B cell (primary cell): ENCODE measurements at regions of chr19 and their contacts with region 1.

Region 1: GRCh38 chr19:38374429-38375176 is at the start of gene PSMD8:
- DNase-seq: peak; percentile 100
- ATAC-seq: peak; percentile 97
- H3K4me3 ChIP-seq: peak within 1 kb of the TSS; percentile 69 to 92 (median 80)
- H3K4me3 Mint-ChIP-seq: peak within 1 kb of the TSS; percentile 93
- H3K27ac ChIP-seq: peak within 1 kb of the TSS; percentile 88 to 90
- H3K27ac Mint-ChIP-seq: peak within 1 kb of the TSS; percentile 96
- H3K4me1 ChIP-seq: peaks cover 17 to 26% of the 10 kb centered on the region in 2 donors
- H3K4me1 Mint-ChIP-seq: peaks cover 26% of the 10 kb centered on the region
- H3K27me3 ChIP-seq: peaks cover 0 to 12% (median 0%) of the 10 kb centered on the region in 4 experiments
- H3K27me3 Mint-ChIP-seq: peaks cover 6% of the 10 kb centered on the region
- CTCF ChIP-seq: peak; percentile 18
- total RNA-seq, gene PSMD8: 77.1 and 88.1 TPM in 2 replicates

Region 2: GRCh38 chr19:38213911-38214625 is 160.5 kb before region 1 on chr19:
- CTCF ChIA-PET with region 1: no interaction called
- POLR2A ChIA-PET with region 1: interaction called, 11 read pairs
- intact Hi-C with region 1: no loop called
- DNase-seq: peak; percentile 63
- ATAC-seq: peak; percentile 45
- H3K4me3 ChIP-seq: no peak overlapping the region
- H3K4me3 Mint-ChIP-seq: peak overlapping the region; percentile 38
- H3K27ac ChIP-seq: no peak overlapping the region
- H3K27ac Mint-ChIP-seq: peak overlapping the region; percentile 50
- H3K4me1 ChIP-seq: peaks cover 26 to 29% of the 10 kb centered on the region in 2 donors
- H3K4me1 Mint-ChIP-seq: peaks cover 31% of the 10 kb centered on the region
- H3K27me3 ChIP-seq: peaks cover 0 to 58% (median 16%) of the 10 kb centered on the region in 4 experiments
- H3K27me3 Mint-ChIP-seq: peaks cover 32% of the 10 kb centered on the region
- CTCF ChIP-seq: no peak

Region 3: GRCh38 chr19:38245826-38246498 is 128.6 kb before region 1 on chr19:
- CTCF ChIA-PET with region 1: interaction called, 14 read pairs
- POLR2A ChIA-PET with region 1: interaction called, 3 read pairs
- intact Hi-C with region 1: no loop called
- DNase-seq: no peak
- ATAC-seq: no peak
- H3K4me3 ChIP-seq: no peak overlapping the region
- H3K4me3 Mint-ChIP-seq: no peak overlapping the region
- H3K27ac ChIP-seq: no peak overlapping the region
- H3K27ac Mint-ChIP-seq: no peak overlapping the region
- H3K4me1 ChIP-seq: peaks cover 3 to 12% of the 10 kb centered on the region in 2 donors
- H3K4me1 Mint-ChIP-seq: peaks cover 15% of the 10 kb centered on the region
- H3K27me3 ChIP-seq: no peaks in the 10 kb centered on the region
- H3K27me3 Mint-ChIP-seq: no peaks in the 10 kb centered on the region
- CTCF ChIP-seq: no peak

Region 4: DNA sequence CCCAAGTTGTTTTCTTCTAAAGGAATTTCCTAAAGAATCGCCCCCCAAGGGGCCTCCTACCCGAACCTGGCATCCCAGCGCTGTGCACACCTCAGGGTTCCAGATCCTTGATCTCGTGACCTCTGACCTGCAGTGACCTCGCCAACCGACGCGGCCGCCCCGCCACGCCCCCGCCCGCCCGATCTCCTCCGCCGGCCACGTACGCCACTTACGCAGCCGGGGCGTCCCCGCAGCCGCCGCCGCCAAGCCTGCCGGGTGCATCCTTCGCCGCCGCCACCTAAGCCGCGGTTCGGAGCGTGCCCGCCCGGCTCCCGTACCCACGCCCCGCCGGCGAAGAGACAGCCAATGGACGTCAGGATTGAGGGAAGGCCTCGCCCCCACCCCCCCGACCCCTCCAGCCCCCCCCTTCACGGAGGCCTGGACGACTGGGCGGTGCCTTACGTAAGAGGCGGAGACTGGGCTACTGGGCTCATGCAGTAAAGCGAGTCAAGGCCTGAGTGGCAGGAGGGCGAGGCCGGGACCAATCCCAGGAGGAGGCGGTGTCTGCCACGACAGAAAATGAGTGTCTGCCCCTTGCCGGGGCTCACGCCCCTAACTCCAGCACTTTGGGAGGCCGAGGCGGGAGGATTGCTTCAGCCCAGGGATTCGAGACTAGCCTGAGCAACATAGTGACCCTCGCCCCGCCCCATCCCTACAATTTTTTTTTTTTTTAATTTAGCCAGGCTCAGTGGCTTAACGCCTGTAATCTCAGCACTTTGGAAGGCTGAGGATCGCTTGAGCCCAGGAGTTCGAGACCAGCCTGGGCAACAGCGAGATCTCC is 58.7 kb before region 1 on chr19 and contains the start of gene YIF1B:
- CTCF ChIA-PET with region 1: no interaction called
- POLR2A ChIA-PET with region 1: interaction called, 3 read pairs
- intact Hi-C with region 1: loop called (anchors 1 kb)
- DNase-seq: peak; percentile 96
- ATAC-seq: peak; percentile 91
- H3K4me3 ChIP-seq: peak within 1 kb of the TSS; percentile 62 to 90 (median 70)
- H3K4me3 Mint-ChIP-seq: peak within 1 kb of the TSS; percentile 96
- H3K27ac ChIP-seq: peak within 1 kb of the TSS; percentile 85 to 91
- H3K27ac Mint-ChIP-seq: peak within 1 kb of the TSS; percentile 96
- H3K4me1 ChIP-seq: peaks cover 29 to 47% of the 10 kb centered on the region in 2 donors
- H3K4me1 Mint-ChIP-seq: peaks cover 47% of the 10 kb centered on the region
- H3K27me3 ChIP-seq: peaks cover 0 to 2% (median 0%) of the 10 kb centered on the region in 4 experiments
- H3K27me3 Mint-ChIP-seq: no peaks in the 10 kb centered on the region
- CTCF ChIP-seq: no peak
- total RNA-seq, gene YIF1B: 30.6 and 31.6 TPM in 2 replicates

Region 5: DNA sequence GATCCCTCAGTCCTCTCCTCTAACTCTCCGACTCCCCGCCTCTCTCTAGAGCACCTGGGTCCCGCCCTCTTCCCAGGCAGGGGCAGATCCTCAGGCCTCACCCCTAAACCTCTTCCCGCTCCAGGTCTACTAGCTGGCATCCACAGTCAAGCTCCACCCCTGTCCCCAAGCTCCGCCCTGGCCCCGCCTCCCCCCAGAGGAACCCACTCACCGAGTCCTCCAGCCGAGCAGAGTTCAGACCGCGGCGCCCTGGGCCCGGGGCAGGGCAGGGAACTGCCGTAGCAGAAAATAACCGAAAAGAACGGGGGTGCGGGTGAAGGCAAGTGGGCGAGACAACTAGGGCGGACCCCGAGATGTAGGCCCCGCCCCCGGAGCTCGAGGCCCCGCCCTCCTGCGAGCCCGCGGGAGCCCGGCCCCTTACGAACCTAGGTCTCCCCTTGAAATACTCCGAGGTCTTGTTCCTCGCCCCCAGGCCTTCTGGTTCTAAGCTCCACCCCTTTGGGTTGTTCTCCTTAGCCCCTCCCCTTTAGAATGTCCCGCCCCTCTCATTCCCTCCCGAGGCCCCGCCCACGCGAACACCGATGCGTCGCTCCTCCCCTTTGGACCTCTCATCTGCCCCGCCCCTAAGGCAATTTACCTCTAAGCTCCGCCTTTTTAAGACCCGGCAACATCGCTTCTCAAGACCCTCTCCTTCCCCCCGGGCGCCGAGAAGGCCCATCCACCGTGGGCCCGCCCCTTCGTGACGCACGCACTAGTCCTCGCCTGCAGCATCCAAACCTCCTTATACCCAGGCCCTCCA is 13.1 kb after region 1 on chr19 and contains the start of gene GGN:
- CTCF ChIA-PET with region 1: no interaction called
- POLR2A ChIA-PET with region 1: interaction called, 11 read pairs
- intact Hi-C with region 1: loop called (anchors 1 kb)
- DNase-seq: peak; percentile 84
- ATAC-seq: peak; percentile 65
- H3K4me3 ChIP-seq: peak within 1 kb of the TSS; percentile 11 to 77 (median 41)
- H3K4me3 Mint-ChIP-seq: peak within 1 kb of the TSS; percentile 97
- H3K27ac ChIP-seq: no peak within 1 kb of the TSS
- H3K27ac Mint-ChIP-seq: peak within 1 kb of the TSS; percentile 75
- H3K4me1 ChIP-seq: peaks cover 36% of the 10 kb centered on the region in 2 donors
- H3K4me1 Mint-ChIP-seq: peaks cover 31% of the 10 kb centered on the region
- H3K27me3 ChIP-seq: peaks cover 0 to 49% (median 21%) of the 10 kb centered on the region in 4 experiments
- H3K27me3 Mint-ChIP-seq: peaks cover 27% of the 10 kb centered on the region
- CTCF ChIP-seq: no peak
- total RNA-seq, gene GGN: 0.34 TPM in 2 replicates

Region 6: GRCh38 chr19:38411041-38411712 is 36.6 kb after region 1 on chr19:
- CTCF ChIA-PET with region 1: no interaction called
- POLR2A ChIA-PET with region 1: no interaction called
- intact Hi-C with region 1: no loop called
- DNase-seq: no peak
- ATAC-seq: no peak
- H3K4me3 ChIP-seq: no peak overlapping the region
- H3K4me3 Mint-ChIP-seq: no peak overlapping the region
- H3K27ac ChIP-seq: no peak overlapping the region
- H3K27ac Mint-ChIP-seq: no peak overlapping the region
- H3K4me1 ChIP-seq: no peaks in the 10 kb centered on the region
- H3K4me1 Mint-ChIP-seq: no peaks in the 10 kb centered on the region
- H3K27me3 ChIP-seq: no peaks in the 10 kb centered on the region
- H3K27me3 Mint-ChIP-seq: no peaks in the 10 kb centered on the region
- CTCF ChIP-seq: no peak

Region 7: DNA sequence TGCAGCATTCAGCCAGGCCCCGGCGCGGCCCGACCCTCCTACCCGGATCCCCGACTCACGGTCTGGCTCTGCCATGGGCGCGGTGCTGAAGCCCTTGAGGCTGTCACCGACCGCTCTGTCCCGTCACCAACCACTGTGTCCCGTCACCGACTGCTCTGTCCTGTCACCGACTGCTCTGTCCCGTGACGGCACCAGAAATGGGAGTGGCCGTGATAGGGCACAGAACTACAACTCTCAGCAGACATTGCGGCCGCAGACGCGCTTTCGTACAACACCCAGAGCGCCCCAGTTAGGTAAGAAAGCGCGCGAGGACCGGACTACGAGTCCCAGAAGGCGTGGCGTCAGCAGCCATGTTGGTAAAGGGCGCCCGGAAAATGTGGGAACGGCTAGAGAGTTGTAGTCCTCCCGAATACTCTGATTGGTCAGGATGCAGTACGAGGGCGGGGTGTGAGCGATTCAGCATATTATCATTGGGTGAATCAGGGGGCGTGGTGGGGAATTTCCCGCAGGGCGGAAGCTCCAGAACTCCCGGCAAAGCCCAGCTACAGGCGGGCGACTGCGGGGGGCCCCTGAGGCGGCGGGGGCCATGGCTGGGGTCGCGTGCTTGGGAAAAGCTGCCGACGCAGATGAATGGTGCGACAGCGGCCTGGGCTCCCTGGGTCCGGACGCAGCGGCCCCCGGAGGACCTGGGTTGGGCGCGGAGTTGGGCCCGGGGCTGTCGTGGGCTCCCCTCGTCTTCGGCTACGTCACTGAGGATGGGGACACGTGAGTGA is 525.0 kb after region 1 on chr19 and contains the starts of genes NFKBIB and SIRT2:
- CTCF ChIA-PET with region 1: no interaction called
- POLR2A ChIA-PET with region 1: no interaction called
- intact Hi-C with region 1: loop called (anchors 1 kb)
- DNase-seq: peak; percentile 100
- ATAC-seq: peak; percentile 89
- H3K4me3 ChIP-seq: peak within 1 kb of the TSS; percentile 85 to 95 (median 92)
- H3K4me3 Mint-ChIP-seq: peak within 1 kb of the TSS; percentile 96
- H3K27ac ChIP-seq: peak within 1 kb of the TSS; percentile 89 to 99
- H3K27ac Mint-ChIP-seq: peak within 1 kb of the TSS; percentile 94
- H3K4me1 ChIP-seq: peaks cover 20 to 30% of the 10 kb centered on the region in 2 donors
- H3K4me1 Mint-ChIP-seq: peaks cover 38% of the 10 kb centered on the region
- H3K27me3 ChIP-seq: no peaks in the 10 kb centered on the region
- H3K27me3 Mint-ChIP-seq: no peaks in the 10 kb centered on the region
- CTCF ChIP-seq: no peak
- total RNA-seq, gene NFKBIB: 30.3 and 31.5 TPM in 2 replicates
- total RNA-seq, gene SIRT2: 41.8 and 42.4 TPM in 2 replicates